ENCODE measurements at regions of chr12 and their contacts with region 1.

Region 1: GRCh38 chr12:80412369-80412953 is 31.6 kb upstream of the PTPRQ start:
- DNase-seq: peak in 1 of 2 experiments; percentile 43
- H3K4me3 ChIP-seq: no peak overlapping the region
- H3K4me3 Mint-ChIP-seq: no peak overlapping the region
- H3K27ac Mint-ChIP-seq: no peak overlapping the region
- H3K4me1 ChIP-seq: no peaks in the 10 kb centered on the region
- H3K4me1 Mint-ChIP-seq: no peaks in the 10 kb centered on the region
- H3K27me3 ChIP-seq: no peaks in the 10 kb centered on the region
- H3K27me3 Mint-ChIP-seq: peaks cover 7% of the 10 kb centered on the region
- CTCF ChIP-seq: peak; percentile 68 to 71

Region 2: DNA sequence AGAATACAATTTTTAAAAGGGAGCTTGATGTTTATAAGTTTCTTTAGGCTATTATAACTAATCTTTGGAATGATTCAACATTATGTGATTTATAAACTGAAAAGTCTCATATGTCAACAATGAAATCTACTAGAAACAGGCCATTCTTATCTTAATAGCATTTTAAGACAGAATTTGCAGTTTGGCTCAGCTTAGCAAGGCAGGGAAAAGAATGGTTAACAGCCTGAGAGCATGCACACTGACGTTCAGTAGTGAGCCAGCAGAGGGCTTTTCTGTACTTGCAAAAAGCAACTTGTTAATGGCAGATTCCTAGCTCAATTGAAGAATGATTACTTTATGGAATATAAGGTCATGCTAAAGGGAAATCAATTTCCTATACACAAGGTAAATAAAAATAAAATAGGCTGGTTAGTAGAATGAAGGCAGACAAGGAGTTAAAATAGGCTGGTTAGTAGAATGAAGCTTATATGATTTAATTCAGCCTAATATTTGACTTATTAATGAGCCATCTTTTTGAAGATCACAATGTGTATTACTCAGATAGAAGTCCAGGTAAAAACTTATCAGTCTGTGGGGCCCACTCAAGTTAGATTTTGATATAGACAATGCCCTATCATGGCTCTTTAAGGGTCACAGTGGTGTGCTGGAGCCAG is 217.3 kb before region 1 on chr12:
- CTCF ChIA-PET with region 1: no interaction called
- POLR2A ChIA-PET with region 1: no interaction called
- intact Hi-C with region 1: loop called (anchors 5 kb)
- DNase-seq: peak; percentile 45 to 49
- H3K4me3 ChIP-seq: no peak overlapping the region
- H3K4me3 Mint-ChIP-seq: no peak overlapping the region
- H3K27ac Mint-ChIP-seq: no peak overlapping the region
- H3K4me1 ChIP-seq: no peaks in the 10 kb centered on the region
- H3K4me1 Mint-ChIP-seq: no peaks in the 10 kb centered on the region
- H3K27me3 ChIP-seq: no peaks in the 10 kb centered on the region
- H3K27me3 Mint-ChIP-seq: peaks cover 3% of the 10 kb centered on the region
- CTCF ChIP-seq: peak; percentile 65 to 77

Region 3: DNA sequence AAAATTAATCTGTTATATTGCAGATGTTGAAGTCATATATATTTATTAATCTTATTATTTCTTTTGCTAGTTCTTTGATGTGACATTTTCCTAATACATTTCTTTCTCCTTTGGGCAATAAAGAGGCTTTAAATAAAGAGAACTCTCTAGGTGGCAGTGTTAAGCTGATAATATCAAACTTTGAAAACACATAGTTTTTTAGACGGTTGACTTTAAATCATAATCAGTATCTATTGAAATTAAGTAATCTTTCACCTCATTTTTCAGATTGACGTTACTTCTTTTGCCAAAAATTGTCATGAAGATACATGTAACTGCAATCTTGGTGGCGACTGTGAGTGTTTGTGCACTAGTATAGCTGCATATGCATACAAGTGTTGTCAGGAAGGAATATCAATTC is 99.3 kb before region 1 on chr12:
- CTCF ChIA-PET with region 1: no interaction called
- POLR2A ChIA-PET with region 1: no interaction called
- intact Hi-C with region 1: loop called (anchors 1 kb)
- DNase-seq: no peak
- H3K4me3 ChIP-seq: no peak overlapping the region
- H3K4me3 Mint-ChIP-seq: no peak overlapping the region
- H3K27ac Mint-ChIP-seq: no peak overlapping the region
- H3K4me1 ChIP-seq: no peaks in the 10 kb centered on the region
- H3K4me1 Mint-ChIP-seq: no peaks in the 10 kb centered on the region
- H3K27me3 ChIP-seq: no peaks in the 10 kb centered on the region
- H3K27me3 Mint-ChIP-seq: peaks cover 5% of the 10 kb centered on the region
- CTCF ChIP-seq: peak in 1 of 2 experiments; percentile 2

Region 4: GRCh38 chr12:80441921-80442320 is 29.5 kb after region 1 on chr12:
- CTCF ChIA-PET with region 1: no interaction called
- POLR2A ChIA-PET with region 1: no interaction called
- intact Hi-C with region 1: loop called (anchors 2 kb)
- DNase-seq: no peak
- H3K4me3 ChIP-seq: no peak overlapping the region
- H3K4me3 Mint-ChIP-seq: no peak overlapping the region
- H3K27ac Mint-ChIP-seq: no peak overlapping the region
- H3K4me1 ChIP-seq: peaks cover 10% of the 10 kb centered on the region; the same call in 1 of the 2 replicates
- H3K4me1 Mint-ChIP-seq: peaks cover 10% of the 10 kb centered on the region
- H3K27me3 ChIP-seq: no peaks in the 10 kb centered on the region
- H3K27me3 Mint-ChIP-seq: peaks cover 3% of the 10 kb centered on the region
- CTCF ChIP-seq: no peak

Region 5: GRCh38 chr12:80472902-80473500 is 60.5 kb after region 1 on chr12:
- CTCF ChIA-PET with region 1: no interaction called
- POLR2A ChIA-PET with region 1: no interaction called
- intact Hi-C with region 1: loop called (anchors 5 kb)
- DNase-seq: peak in 1 of 2 experiments; percentile 38
- H3K4me3 ChIP-seq: no peak overlapping the region
- H3K4me3 Mint-ChIP-seq: no peak overlapping the region
- H3K27ac Mint-ChIP-seq: no peak overlapping the region
- H3K4me1 ChIP-seq: no peaks in the 10 kb centered on the region
- H3K4me1 Mint-ChIP-seq: no peaks in the 10 kb centered on the region
- H3K27me3 ChIP-seq: no peaks in the 10 kb centered on the region
- H3K27me3 Mint-ChIP-seq: no peaks in the 10 kb centered on the region
- CTCF ChIP-seq: peak in 1 of 2 experiments; percentile 56

Region 6: GRCh38 chr12:80567401-80567800 is 154.9 kb after region 1 on chr12:
- CTCF ChIA-PET with region 1: no interaction called
- POLR2A ChIA-PET with region 1: no interaction called
- intact Hi-C with region 1: no loop called
- DNase-seq: no peak
- H3K4me3 ChIP-seq: no peak overlapping the region
- H3K4me3 Mint-ChIP-seq: no peak overlapping the region
- H3K27ac Mint-ChIP-seq: no peak overlapping the region
- H3K4me1 ChIP-seq: no peaks in the 10 kb centered on the region
- H3K4me1 Mint-ChIP-seq: no peaks in the 10 kb centered on the region
- H3K27me3 ChIP-seq: no peaks in the 10 kb centered on the region
- H3K27me3 Mint-ChIP-seq: no peaks in the 10 kb centered on the region
- CTCF ChIP-seq: no peak

Region 7: GRCh38 chr12:80598004-80598606 is 185.6 kb after region 1 on chr12:
- CTCF ChIA-PET with region 1: no interaction called
- POLR2A ChIA-PET with region 1: no interaction called
- intact Hi-C with region 1: loop called (anchors 2 kb)
- DNase-seq: peak in 1 of 2 experiments; percentile 18
- H3K4me3 ChIP-seq: no peak overlapping the region
- H3K4me3 Mint-ChIP-seq: no peak overlapping the region
- H3K27ac Mint-ChIP-seq: no peak overlapping the region
- H3K4me1 ChIP-seq: 0 out of 2 replicates have a peak, but pooled peaks cover 4% of the 10 kb centered on the region
- H3K4me1 Mint-ChIP-seq: peaks cover 10% of the 10 kb centered on the region
- H3K27me3 ChIP-seq: no peaks in the 10 kb centered on the region
- H3K27me3 Mint-ChIP-seq: peaks cover 4% of the 10 kb centered on the region
- CTCF ChIP-seq: peak; percentile 48 to 52

Region 8: DNA sequence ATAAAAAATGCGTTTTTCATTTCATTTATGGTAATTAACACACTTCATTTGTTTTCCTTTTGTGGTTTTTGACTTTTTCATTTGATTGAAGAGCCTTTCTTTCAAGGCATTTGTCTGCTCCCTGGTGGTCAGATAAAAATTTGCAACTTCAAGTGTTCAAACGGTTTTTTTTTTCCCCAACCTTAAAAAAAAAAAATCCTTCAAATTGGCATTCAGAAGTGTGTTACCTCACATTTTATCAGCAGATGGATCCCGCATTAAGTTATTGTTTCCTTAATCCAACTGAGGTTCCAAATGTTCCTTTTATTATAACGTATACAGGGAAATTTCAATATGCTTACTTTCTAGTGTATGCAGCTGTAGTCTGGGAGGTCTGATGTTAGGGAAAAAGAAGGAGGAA is 351.4 kb after region 1 on chr12:
- CTCF ChIA-PET with region 1: no interaction called
- POLR2A ChIA-PET with region 1: no interaction called
- intact Hi-C with region 1: loop called (anchors 1 kb)
- DNase-seq: peak in 1 of 2 experiments; percentile 37
- H3K4me3 ChIP-seq: no peak overlapping the region
- H3K4me3 Mint-ChIP-seq: no peak overlapping the region
- H3K27ac Mint-ChIP-seq: no peak overlapping the region
- H3K4me1 ChIP-seq: no peaks in the 10 kb centered on the region
- H3K4me1 Mint-ChIP-seq: no peaks in the 10 kb centered on the region
- H3K27me3 ChIP-seq: no peaks in the 10 kb centered on the region
- H3K27me3 Mint-ChIP-seq: peaks cover 9% of the 10 kb centered on the region
- CTCF ChIP-seq: peak; percentile 62 to 64